RWPE1 (cell line): ENCODE measurements at regions of chr1 and their contacts with region 1.

Region 1: GRCh38 chr1:206912445-206913095 is 9.2 kb downstream of the FCMR start:
- DNase-seq: peak; percentile 91
- H3K27ac ChIP-seq: no peak overlapping the region
- CTCF ChIP-seq: peak; percentile 83

Region 2: DNA sequence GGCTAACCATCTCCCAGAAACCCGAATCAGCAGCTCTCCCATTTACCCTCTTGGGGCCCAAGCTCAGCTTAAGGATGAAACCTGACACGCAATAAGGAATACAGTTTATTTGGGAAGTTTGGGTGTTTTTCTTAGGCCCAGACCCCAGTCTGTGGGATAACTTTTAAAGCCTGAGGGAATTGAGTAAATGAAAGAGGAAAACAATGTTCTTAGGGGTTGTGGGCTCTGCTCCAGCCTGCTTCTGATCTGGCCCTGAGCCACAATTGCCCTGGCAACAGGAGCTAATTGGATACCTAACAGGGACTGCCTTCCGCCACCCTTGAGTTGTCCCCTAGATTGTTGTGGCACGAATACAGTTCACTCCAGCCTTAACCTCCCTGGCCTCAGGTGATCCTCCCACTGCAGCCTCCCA is 257.1 kb before region 1 on chr1:
- CTCF ChIA-PET with region 1: no interaction called
- POLR2A ChIA-PET with region 1: interaction called, 10 read pairs
- DNase-seq: no peak
- H3K27ac ChIP-seq: no peak overlapping the region
- CTCF ChIP-seq: no peak

Region 3: DNA sequence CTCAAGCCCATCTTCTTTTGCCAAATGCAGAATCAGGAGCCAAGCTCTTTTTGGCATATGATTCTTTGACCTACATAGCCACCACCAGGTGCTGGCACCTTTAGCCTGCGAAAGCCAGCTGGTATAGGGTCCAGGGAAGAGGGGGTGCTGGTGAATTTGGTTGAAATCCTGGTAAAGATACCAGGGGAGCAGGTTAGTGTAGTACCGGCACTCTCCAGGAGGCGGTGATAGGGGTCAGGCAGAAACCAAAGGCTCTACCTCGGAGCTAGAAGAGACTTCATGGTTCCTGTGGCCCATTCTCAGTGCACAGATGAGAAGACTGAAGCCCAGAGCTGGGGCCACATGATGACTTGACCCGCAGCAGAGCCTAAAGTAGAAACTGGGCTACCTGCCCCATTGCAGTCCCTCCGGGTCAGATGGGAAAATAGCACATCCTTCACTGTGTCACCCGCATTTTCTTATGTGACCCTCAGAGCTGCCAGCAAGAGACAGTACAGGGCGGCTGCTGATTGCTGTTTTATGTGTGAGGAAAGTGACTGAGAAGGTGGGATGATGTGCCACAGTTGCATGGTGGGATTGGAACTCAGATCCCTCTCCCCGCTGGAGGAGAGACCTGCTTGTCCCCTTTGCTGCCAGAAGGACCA is 177.9 kb before region 1 on chr1:
- CTCF ChIA-PET with region 1: interaction called, 27 read pairs
- POLR2A ChIA-PET with region 1: no interaction called
- DNase-seq: peak; percentile 64
- H3K27ac ChIP-seq: no peak overlapping the region
- CTCF ChIP-seq: peak; percentile 45

Region 4: GRCh38 chr1:206865013-206865671 is 47.4 kb before region 1 on chr1 and contains the start of gene IL20:
- CTCF ChIA-PET with region 1: interaction called, 21 read pairs
- POLR2A ChIA-PET with region 1: interaction called, 5 read pairs
- DNase-seq: peak; percentile 78
- H3K27ac ChIP-seq: no peak within 1 kb of the TSS
- CTCF ChIP-seq: peak; percentile 76

Region 5: DNA sequence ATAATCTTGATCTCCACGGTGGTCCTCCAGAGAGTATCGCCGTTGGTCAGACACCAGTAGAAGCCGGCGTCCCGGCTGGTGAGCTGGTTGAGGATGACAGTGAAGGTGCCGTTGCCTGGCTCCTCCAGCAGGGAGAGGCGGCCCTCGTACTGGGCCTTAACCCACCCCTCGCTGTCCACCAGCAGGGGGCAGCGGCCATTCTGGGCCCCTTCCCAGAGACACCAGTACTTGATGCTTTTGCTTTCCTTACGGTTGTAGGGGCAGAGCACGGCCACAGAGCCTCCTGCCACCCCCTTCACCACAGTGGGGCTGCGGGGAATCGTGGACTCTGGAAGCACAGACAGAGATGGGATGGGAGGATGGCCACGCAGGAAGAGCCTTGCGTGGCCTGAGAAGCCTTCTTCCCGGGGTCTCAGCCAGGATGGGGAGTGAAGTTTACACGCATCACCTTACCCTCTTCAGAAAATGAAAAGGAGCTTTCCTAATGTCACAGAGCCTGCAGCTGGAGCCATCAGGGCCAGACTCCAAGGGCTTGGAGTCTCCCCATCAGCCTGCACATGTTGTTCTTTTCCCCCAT is 23.0 kb after region 1 on chr1:
- CTCF ChIA-PET with region 1: no interaction called
- POLR2A ChIA-PET with region 1: no interaction called
- DNase-seq: no peak
- H3K27ac ChIP-seq: no peak overlapping the region
- CTCF ChIP-seq: no peak

Region 6: GRCh38 chr1:206982216-206982615 is 69.6 kb after region 1 on chr1:
- CTCF ChIA-PET with region 1: interaction called, 13 read pairs
- POLR2A ChIA-PET with region 1: interaction called, 4 read pairs
- DNase-seq: peak; percentile 70
- H3K27ac ChIP-seq: no peak overlapping the region
- CTCF ChIP-seq: peak; percentile 73